HEK293 (cell line): ENCODE measurements at regions of chr2 and their contacts with region 1.

Region 1: DNA sequence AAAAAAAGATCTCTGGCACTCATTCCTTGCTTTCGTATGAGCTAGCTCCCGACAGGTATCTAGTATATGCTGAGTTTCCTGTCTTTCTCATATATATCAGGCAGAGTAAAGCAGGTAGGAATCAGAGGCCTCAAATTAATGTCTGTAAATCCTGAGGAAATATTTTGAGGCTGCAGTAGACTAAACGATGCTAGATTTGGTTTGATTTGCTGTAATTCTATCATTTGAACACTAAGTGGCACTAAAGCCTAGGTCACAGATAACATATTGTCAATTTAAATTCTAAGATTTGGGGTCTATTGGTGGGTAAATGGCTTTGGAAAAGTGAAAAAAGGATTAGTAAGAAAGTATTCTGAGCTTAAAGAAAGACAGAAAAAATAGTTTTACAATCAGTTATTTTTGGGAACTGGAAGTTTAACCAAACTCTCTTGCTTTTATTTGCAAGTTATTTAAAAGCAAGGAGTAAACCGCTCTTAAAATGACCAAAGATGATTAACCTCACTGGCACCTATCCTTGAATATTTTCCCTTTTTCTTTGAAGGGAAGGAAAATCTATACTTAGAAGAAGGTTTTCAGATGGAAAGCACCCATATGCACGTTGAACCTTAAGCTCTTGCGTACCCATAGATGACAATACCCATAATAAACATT is 37.6 kb upstream of the SLC4A10 start:
- H3K4me3 ChIP-seq: no peak overlapping the region
- H3K27ac ChIP-seq: no peak overlapping the region
- H3K4me1 ChIP-seq: no peaks in the 10 kb centered on the region
- CTCF ChIP-seq: no peak

Region 2: DNA sequence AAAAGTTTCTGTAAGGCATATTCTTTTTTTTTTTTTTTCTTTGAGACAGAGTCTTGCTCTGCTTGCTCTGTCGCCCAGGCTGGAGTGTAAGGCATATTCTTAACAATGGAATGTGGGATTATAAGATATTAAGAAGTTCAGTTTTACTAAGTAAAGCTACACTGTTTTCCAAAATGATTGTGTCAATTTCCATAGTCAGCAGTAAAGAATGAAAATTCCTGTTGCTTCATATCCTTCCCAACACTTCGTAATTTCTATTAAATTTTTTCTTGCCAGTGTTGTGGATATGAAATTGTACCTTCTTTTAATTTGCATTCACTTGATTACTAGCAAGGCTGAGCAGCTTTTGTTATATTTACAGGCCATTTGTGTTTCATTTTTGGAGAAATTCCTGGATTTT is 13.2 kb after region 1 on chr2:
- CTCF ChIA-PET with region 1: interaction called, 13 read pairs
- POLR2A ChIA-PET with region 1: no interaction called
- H3K4me3 ChIP-seq: no peak overlapping the region
- H3K27ac ChIP-seq: no peak overlapping the region
- H3K4me1 ChIP-seq: no peaks in the 10 kb centered on the region
- CTCF ChIP-seq: no peak

Region 3: DNA sequence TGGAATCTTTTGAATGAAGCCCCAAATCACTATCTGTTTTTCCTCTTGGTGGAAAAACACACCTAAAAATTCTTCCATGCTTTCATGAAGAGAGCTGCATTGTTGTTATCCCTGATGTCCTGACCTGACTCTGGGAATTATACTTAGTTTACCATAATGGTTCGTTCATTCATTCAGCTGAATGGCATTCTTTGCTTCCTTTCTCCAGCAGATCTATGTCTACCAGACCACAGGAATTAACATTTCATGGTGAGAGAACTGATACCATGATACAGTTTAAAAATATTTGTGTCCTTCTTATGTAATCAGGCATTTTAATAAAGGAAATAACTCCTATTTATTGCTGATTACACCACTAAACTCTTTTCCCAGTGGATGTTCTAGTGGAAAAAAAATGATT is 26.5 kb after region 1 on chr2:
- CTCF ChIA-PET with region 1: no interaction called
- POLR2A ChIA-PET with region 1: no interaction called
- H3K4me3 ChIP-seq: no peak overlapping the region
- H3K27ac ChIP-seq: no peak overlapping the region
- H3K4me1 ChIP-seq: no peaks in the 10 kb centered on the region
- CTCF ChIP-seq: no peak

Region 4: DNA sequence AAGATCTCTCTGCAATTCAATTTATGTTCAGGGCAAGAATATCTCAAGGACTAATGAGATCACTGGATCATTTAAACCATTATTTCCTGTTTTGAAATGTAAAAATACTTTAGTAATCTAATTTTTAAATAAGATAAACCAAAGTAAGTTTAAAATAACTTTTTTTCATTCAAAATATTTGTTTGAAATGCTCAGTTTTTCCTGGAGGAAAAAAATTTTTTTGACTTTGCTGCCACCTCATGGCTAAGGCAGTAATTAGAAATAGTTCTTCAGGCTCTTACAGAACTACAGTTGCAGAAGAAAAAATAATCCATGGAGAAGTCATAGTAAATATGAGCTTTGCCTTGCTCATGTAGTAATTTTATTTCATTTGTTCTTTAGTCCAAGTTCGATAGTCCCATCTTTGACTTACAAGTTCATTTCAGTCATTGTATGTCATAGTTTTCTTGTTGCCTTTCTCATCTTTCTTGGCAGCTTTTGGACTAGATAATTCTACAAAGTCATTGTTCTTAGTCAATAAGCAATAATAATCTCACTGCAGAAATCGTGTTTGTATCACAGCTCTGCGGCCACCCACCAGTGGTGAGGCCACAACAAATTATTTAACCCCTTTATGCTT is 360.0 kb after region 1 on chr2:
- CTCF ChIA-PET with region 1: interaction called, 53 read pairs
- POLR2A ChIA-PET with region 1: no interaction called
- H3K4me3 ChIP-seq: no peak overlapping the region
- H3K27ac ChIP-seq: no peak overlapping the region
- H3K4me1 ChIP-seq: no peaks in the 10 kb centered on the region
- CTCF ChIP-seq: no peak

Region 5: GRCh38 chr2:162123806-162124758 is 537.4 kb after region 1 on chr2:
- CTCF ChIA-PET with region 1: interaction called, 34 read pairs
- POLR2A ChIA-PET with region 1: no interaction called
- H3K4me3 ChIP-seq: no peak overlapping the region
- H3K27ac ChIP-seq: no peak overlapping the region
- H3K4me1 ChIP-seq: no peaks in the 10 kb centered on the region
- CTCF ChIP-seq: 0 out of 2 replicates have a peak, but pooled peaks have one; percentile 19

Region 6: DNA sequence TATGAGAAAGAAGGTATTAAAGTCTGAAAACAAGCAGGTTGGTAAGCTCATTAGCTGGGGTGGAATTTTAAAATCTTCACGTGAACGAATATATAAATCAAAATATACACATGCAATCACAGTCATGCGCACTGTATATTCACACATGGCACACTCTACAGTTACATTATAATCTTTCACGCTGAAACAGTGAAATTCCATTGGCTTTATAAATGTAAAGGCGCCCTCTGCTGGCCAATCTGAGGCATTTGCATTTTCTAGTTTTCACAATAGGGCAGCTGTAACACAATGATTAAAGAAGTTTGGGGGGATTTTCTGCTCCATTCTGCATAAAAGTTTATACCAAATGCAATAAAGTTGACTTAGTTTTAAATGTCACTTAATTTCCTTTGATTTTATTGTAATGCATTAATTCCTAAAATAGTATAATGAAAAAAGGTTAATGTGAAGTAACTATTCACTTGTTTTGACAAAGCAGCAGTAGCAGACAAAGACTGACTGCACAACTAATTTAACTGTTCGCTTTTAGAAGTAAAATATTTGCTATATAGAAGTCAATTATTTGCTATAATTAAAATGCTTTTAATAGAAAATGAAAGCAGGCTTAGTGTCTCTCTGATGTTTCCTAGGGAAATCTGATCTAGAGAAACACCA is 714.6 kb after region 1 on chr2:
- CTCF ChIA-PET with region 1: interaction called, 10 read pairs
- POLR2A ChIA-PET with region 1: no interaction called
- H3K4me3 ChIP-seq: no peak overlapping the region
- H3K27ac ChIP-seq: no peak overlapping the region
- H3K4me1 ChIP-seq: no peaks in the 10 kb centered on the region
- CTCF ChIP-seq: 0 out of 2 replicates have a peak, but pooled peaks have one; percentile 10

Region 7: DNA sequence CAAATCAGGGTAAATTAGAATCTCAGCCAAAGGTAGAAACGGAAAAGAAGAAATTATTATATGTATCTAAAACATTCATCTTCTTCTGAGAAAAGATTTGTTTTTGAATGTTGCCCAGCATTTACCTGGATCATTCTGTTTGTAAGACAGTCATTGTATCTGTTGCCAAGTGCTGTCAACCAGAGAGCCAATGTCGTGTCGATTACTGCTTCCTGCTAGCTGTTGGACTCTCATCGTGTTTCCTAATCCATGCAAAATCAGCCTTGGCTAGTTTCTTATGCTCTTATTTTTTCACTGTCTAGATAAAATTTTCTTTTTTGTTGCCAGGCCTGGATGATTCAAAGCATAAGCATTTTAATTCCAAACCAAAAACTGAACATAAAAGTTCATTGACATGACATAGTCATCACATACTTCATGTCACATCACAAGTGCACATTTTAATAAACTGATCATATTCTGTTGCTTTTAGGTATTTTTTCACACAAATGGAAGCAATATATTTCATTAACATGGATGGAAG is 1049.6 kb after region 1 on chr2:
- CTCF ChIA-PET with region 1: no interaction called
- POLR2A ChIA-PET with region 1: no interaction called
- H3K4me3 ChIP-seq: no peak overlapping the region
- H3K27ac ChIP-seq: no peak overlapping the region
- H3K4me1 ChIP-seq: no peaks in the 10 kb centered on the region
- CTCF ChIP-seq: no peak